ENCODE measurements at regions of chr1 and their contacts with region 1.

Region 1: GRCh38 chr1:43073490-43074230 is 98.4 kb downstream of the EBNA1BP2 start:
- DNase-seq: peak; percentile 61
- ATAC-seq: peak; percentile 94
- H3K4me3 ChIP-seq: no peak overlapping the region
- H3K27ac ChIP-seq: no peak overlapping the region
- H3K4me1 ChIP-seq: no peaks in the 10 kb centered on the region
- H3K27me3 ChIP-seq: no peaks in the 10 kb centered on the region
- CTCF ChIP-seq: peak; percentile 81

Region 2: DNA sequence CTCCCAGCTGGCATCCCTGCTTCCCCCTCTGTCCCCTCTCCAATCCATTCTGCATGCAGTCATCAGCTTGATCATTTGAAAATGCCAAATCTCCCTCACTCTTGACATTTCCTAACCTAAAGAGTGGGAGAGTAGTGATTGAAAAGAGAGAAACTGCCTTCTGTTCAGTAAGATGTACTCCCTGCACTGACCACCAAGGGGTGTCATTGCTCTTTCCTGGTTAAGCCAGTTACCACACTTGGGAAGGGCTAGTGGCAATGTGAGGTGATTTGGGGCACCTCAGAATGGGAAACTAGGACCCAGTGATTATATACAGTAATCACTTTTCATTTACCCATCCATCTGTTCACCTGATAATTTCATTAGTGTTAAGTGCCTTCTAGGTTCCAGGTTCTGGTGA is 295.8 kb before region 1 on chr1:
- CTCF ChIA-PET with region 1: interaction called, 8 read pairs
- POLR2A ChIA-PET with region 1: no interaction called
- in situ Hi-C with region 1: no loop called
- intact Hi-C with region 1: loop called (anchors 5 kb)
- DNase-seq: no peak
- ATAC-seq: 0 out of 2 replicates have a peak, but pooled peaks have one; percentile 78
- H3K4me3 ChIP-seq: no peak overlapping the region
- H3K27ac ChIP-seq: no peak overlapping the region
- H3K4me1 ChIP-seq: no peaks in the 10 kb centered on the region
- H3K27me3 ChIP-seq: no peaks in the 10 kb centered on the region
- CTCF ChIP-seq: peak; percentile 77

Region 3: DNA sequence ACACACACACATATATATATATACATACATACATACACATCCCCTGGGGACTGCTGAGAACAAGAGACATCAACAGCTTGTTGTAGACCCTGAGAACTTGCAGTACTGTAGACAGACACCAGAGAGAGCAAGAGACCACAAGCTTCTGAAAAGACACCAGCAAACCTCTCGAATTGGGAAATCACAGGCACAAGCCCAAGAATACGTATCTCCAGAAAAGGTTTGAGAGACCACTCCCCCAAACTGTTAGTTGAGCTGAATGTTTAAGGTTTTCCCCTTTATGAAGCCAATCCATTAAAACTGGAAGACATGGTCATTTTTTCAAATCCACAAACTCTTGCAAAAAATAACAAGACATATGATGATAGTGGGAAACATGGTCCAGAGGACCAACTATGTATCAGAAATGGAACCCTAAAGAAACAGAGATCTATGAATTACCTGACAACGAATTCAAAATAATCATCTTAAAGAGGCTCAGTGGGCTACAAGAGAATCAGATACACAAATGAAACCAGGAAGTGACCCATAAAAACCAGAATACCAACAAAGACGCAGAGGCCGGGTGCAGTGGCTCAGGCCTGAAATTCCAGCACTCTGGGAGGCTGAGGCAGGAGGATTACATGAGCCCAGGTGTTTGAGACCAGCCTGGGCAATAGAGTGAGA is 160.1 kb before region 1 on chr1:
- CTCF ChIA-PET with region 1: interaction called, 89 read pairs
- POLR2A ChIA-PET with region 1: no interaction called
- in situ Hi-C with region 1: no loop called
- intact Hi-C with region 1: loop called (anchors 1 kb)
- DNase-seq: peak; percentile 82
- ATAC-seq: peak; percentile 94
- H3K4me3 ChIP-seq: no peak overlapping the region
- H3K27ac ChIP-seq: no peak overlapping the region
- H3K4me1 ChIP-seq: no peaks in the 10 kb centered on the region
- H3K27me3 ChIP-seq: no peaks in the 10 kb centered on the region
- CTCF ChIP-seq: peak; percentile 72

Region 4: GRCh38 chr1:42924082-42924850 is 149.4 kb before region 1 on chr1:
- CTCF ChIA-PET with region 1: interaction called, 25 read pairs
- POLR2A ChIA-PET with region 1: interaction called, 12 read pairs
- in situ Hi-C with region 1: no loop called
- intact Hi-C with region 1: no loop called
- DNase-seq: peak; percentile 84
- ATAC-seq: peak; percentile 98
- H3K4me3 ChIP-seq: peak overlapping the region; percentile 62 to 78
- H3K27ac ChIP-seq: peak overlapping the region; percentile 88
- H3K4me1 ChIP-seq: peaks cover 12% of the 10 kb centered on the region
- H3K27me3 ChIP-seq: no peaks in the 10 kb centered on the region
- CTCF ChIP-seq: no peak

Region 5: GRCh38 chr1:42993631-42994121 is 80.0 kb before region 1 on chr1:
- CTCF ChIA-PET with region 1: no interaction called
- POLR2A ChIA-PET with region 1: no interaction called
- in situ Hi-C with region 1: no loop called
- intact Hi-C with region 1: no loop called
- DNase-seq: no peak
- ATAC-seq: no peak
- H3K4me3 ChIP-seq: no peak overlapping the region
- H3K27ac ChIP-seq: no peak overlapping the region
- H3K4me1 ChIP-seq: no peaks in the 10 kb centered on the region
- H3K27me3 ChIP-seq: no peaks in the 10 kb centered on the region
- CTCF ChIP-seq: no peak

Region 6: DNA sequence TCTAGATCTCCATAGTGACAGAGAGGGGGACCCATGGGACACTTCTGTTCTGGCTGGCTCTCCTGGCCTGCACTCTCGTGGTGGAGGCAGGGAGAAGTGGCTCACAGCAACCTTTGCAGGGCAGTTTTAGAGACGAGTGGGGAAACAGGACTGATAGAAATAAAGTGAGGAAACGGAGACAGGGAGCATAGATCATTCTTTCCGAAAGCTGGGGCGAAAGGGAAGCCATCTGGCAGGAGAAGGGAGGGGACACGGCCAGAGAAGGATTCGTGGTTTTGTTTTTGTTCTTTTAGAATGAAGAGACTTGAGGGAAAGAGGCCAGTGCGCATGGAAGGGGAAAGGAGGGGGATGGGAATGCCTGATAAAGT is 230.6 kb after region 1 on chr1:
- CTCF ChIA-PET with region 1: no interaction called
- POLR2A ChIA-PET with region 1: no interaction called
- in situ Hi-C with region 1: no loop called
- intact Hi-C with region 1: no loop called
- DNase-seq: no peak
- ATAC-seq: no peak
- H3K4me3 ChIP-seq: no peak overlapping the region
- H3K27ac ChIP-seq: no peak overlapping the region
- H3K4me1 ChIP-seq: no peaks in the 10 kb centered on the region
- H3K27me3 ChIP-seq: no peaks in the 10 kb centered on the region
- CTCF ChIP-seq: no peak

Measured in Panc1 (cell line).